AG04449 (cell line): ENCODE measurements at regions of chr12 and their contacts with region 1.

Region 1: GRCh38 chr12:80269803-80270552 is 170.6 kb downstream of the OTOGL start:
- DNase-seq: no peak
- H3K4me3 ChIP-seq: no peak overlapping the region
- CTCF ChIP-seq: peak; percentile 56

Region 2: GRCh38 chr12:79407671-79408622 is 862.0 kb before region 1 on chr12:
- CTCF ChIA-PET with region 1: interaction called, 22 read pairs
- POLR2A ChIA-PET with region 1: no interaction called
- DNase-seq: peak; percentile 77
- H3K4me3 ChIP-seq: no peak overlapping the region
- CTCF ChIP-seq: peak; percentile 80

Region 3: GRCh38 chr12:80205960-80206359 is 64.0 kb before region 1 on chr12:
- CTCF ChIA-PET with region 1: interaction called, 403 read pairs
- POLR2A ChIA-PET with region 1: no interaction called
- DNase-seq: no peak
- H3K4me3 ChIP-seq: no peak overlapping the region
- CTCF ChIP-seq: no peak

Region 4: GRCh38 chr12:80217011-80217535 is 52.9 kb before region 1 on chr12:
- CTCF ChIA-PET with region 1: no interaction called
- POLR2A ChIA-PET with region 1: no interaction called
- DNase-seq: no peak
- H3K4me3 ChIP-seq: no peak overlapping the region
- CTCF ChIP-seq: no peak

Region 5: GRCh38 chr12:80241576-80242273 is 28.3 kb before region 1 on chr12:
- CTCF ChIA-PET with region 1: interaction called, 18 read pairs
- POLR2A ChIA-PET with region 1: no interaction called
- DNase-seq: peak; percentile 50
- H3K4me3 ChIP-seq: no peak overlapping the region
- CTCF ChIP-seq: no peak

Region 6: GRCh38 chr12:80282761-80283160 is 12.8 kb after region 1 on chr12:
- CTCF ChIA-PET with region 1: interaction called, 17 read pairs
- POLR2A ChIA-PET with region 1: no interaction called
- DNase-seq: no peak
- H3K4me3 ChIP-seq: no peak overlapping the region
- CTCF ChIP-seq: no peak

Region 7: DNA sequence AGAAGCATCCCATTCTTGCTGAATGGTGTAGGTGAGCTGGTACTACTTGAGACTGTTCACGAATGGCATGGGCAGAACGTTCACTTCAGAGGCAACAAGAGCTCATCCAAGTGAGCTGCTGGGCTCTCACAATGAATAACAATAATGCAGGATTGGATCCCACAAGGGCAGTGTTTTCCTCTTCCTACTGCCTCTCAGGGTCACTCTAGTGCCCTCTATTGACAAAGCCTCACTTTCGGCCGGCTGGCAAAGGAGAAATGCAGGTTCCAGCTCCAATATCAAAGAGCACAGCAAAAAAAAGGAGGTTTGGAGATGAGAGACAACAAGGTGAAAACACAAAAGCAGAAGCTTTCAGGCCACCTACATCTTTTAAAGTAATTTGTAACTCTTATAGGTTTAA is 362.9 kb after region 1 on chr12:
- CTCF ChIA-PET with region 1: no interaction called
- POLR2A ChIA-PET with region 1: no interaction called
- DNase-seq: no peak
- H3K4me3 ChIP-seq: no peak overlapping the region
- CTCF ChIP-seq: no peak

Region 8: DNA sequence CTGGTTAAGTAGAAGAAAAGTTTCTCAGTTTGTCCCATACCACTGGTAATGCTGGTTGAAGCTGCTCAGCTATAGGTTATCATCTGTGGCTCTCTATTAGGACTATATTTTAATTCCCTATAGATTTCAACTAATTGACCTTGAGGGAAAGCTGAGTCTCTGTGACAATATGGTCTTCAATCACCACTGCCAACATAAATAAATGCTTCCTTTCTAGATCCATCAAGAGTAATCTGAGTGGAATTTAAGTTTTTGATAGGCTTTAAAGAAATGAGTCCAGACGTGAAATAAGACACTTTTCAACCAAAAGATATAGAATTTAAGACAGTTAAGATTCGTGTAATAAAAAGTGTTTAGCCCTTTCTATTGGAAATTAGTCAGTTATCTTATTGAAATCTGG is 374.0 kb after region 1 on chr12:
- CTCF ChIA-PET with region 1: no interaction called
- POLR2A ChIA-PET with region 1: no interaction called
- DNase-seq: no peak
- H3K4me3 ChIP-seq: no peak overlapping the region
- CTCF ChIP-seq: no peak